ENCODE measurements at regions of chr10 and their contacts with region 1.

Region 1: DNA sequence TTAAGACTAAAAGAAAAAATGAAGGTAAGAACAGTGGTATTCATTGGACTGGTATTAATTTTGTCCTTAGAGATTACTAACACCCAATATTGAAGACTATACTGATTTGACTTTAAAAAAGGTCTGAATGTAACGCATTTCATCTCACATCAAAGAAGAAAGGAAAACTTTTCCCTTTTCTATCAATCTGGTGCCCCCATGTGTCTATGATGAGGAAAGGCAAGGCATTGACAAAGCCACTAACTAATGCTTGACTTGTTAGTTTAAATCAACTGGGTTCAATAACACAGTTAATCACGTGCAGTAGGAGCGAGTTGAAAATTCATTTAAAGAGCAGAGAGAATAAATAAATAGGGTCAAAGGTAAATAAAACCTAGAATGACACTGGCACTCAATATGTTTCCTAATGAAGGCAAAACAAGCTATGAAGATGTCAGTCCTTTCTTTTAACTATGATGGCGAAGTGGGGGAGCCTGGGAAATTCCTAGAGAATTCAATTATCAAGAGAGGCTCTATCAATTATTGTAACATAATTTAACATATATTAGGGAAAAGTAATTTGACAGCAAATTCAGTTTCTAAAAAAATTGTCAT is 180.9 kb downstream of the ANK3 start:
- H3K4me3 ChIP-seq: no peak overlapping the region
- H3K27ac ChIP-seq: no peak overlapping the region
- H3K4me1 ChIP-seq: no peaks in the 10 kb centered on the region
- CTCF ChIP-seq: no peak

Region 2: DNA sequence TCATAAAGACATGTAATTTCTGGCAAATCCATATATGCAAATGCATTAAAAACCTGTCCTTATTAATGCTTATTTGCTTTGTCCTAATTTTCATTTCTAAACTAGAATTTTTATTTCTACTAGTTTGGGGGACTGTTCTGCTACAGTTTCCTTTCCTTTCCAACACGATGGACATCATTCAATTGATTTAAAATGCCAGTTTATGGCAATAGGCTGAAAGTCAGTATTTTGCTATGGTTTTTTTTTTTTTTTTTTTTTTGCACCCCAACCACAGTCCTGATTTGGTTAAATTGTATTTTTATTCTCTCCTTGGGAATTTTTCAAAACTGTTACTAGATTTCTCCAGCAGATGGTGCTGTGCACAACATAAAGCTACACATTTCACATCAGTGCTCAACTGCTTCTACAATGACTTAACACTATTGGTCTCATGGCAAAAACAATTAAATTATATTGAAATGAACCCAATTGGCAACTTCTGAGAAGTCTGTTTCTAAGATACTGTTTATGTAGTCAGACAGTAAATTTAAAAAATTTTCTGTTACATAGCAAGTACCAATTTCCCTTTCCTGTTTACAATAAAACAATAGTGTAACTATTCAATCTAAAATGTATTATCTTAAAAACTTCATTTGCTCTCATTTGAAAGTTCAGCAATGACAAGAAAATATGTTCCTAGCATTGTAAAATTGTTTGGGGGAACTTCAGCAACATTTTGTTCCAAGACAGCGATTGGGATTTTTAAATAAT is 108.6 kb before region 1 on chr10:
- CTCF ChIA-PET with region 1: interaction called, 129 read pairs
- POLR2A ChIA-PET with region 1: no interaction called
- H3K4me3 ChIP-seq: no peak overlapping the region
- H3K27ac ChIP-seq: no peak overlapping the region
- H3K4me1 ChIP-seq: peaks cover 2% of the 10 kb centered on the region
- CTCF ChIP-seq: no peak

Region 3: DNA sequence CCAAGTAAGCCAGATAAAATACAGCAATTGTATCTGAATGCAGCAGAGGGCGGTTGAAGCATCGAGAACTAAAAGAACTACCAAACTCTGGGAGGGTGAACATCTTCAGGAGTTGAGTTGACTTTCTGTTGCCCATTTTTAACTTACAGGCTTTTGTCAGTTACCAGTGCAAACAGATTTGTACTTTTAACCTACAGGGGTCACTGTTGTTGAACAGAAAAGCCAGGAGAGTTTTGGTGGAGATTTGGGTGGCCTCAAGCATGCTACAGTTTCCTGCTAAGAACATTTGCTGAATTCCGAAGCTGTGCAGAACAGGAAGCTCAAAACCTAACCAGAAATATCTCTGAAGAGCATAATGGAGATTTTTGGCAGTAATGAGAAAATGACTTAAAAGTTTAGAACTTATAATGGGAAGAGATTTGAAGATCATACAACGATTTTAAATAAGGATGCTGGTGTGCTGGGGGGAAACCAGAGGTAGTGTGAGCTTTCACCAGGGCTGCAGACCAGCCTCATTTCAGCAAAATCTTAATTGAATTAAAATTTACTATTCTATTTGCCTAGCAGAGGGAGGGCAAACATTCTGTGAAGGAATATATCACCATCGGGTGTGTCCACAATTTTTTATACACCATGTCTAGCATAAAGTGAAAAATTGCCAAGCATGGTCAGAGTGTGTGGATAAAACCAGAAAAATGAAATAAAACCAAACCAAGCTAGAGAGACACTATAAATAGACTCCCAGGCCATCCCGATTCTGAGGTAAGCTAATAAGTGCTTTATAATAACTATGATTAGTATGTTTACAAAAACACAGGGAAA is 93.8 kb before region 1 on chr10:
- CTCF ChIA-PET with region 1: interaction called, 101 read pairs
- POLR2A ChIA-PET with region 1: no interaction called
- H3K4me3 ChIP-seq: no peak overlapping the region
- H3K27ac ChIP-seq: no peak overlapping the region
- H3K4me1 ChIP-seq: no peaks in the 10 kb centered on the region
- CTCF ChIP-seq: peak; percentile 47; the same call in 1 of the 2 replicates

Region 4: DNA sequence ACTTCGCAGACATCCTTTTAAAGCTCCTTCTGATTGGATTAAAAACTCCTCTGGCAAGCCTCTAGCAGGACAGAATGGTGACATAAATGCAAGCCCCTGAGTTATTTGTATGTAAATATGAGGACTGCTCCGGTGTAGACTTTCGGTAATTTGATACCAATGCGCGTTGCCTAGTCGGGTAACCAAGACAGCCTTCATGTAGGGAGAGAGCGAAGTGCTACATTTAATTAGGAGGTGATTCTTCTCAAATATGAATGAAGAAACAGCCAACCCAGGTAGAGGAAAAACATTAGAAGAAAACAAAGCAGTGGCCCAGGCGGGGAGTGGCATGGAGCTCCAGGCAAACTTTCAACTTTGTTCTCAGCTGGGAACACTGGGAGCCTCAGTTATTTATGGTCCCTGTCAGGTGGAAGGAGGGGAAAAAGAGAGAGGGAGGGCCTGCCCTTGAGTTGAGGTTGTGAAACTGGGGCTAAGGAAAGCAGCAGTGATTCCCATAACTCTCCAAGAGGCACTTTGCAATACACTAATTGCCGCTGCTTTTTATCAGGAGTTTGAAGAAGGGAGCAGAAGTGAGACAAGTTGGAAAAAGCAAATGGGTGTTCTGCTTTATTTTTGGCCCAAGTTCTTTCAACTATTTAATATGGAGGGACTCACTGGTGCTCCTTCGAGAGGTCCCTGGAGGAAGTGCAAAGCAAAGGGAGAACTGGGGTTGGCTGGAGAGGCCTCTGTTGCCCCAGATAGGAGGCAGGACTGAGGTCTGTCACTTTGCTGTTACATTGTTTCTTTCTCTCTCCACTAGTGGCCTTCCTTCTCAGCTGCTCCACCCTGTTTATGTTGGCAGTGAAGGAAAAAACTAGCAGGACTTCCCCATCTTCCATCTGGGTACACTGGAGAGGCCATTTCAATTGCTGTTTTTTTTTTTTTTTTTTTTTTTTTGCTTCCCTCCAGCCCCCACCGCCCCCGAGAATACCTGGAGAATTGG is 67.8 kb before region 1 on chr10:
- CTCF ChIA-PET with region 1: interaction called, 10 read pairs
- POLR2A ChIA-PET with region 1: no interaction called
- H3K4me3 ChIP-seq: peak overlapping the region; percentile 45
- H3K27ac ChIP-seq: peak overlapping the region; percentile 75
- H3K4me1 ChIP-seq: peaks cover 15% of the 10 kb centered on the region
- CTCF ChIP-seq: peak; percentile 57; the same call in 1 of the 2 replicates

Region 5: GRCh38 chr10:60197206-60197605 is 11.6 kb before region 1 on chr10:
- CTCF ChIA-PET with region 1: interaction called, 15 read pairs
- POLR2A ChIA-PET with region 1: no interaction called
- H3K4me3 ChIP-seq: no peak overlapping the region
- H3K27ac ChIP-seq: no peak overlapping the region
- H3K4me1 ChIP-seq: no peaks in the 10 kb centered on the region
- CTCF ChIP-seq: no peak

Region 6: DNA sequence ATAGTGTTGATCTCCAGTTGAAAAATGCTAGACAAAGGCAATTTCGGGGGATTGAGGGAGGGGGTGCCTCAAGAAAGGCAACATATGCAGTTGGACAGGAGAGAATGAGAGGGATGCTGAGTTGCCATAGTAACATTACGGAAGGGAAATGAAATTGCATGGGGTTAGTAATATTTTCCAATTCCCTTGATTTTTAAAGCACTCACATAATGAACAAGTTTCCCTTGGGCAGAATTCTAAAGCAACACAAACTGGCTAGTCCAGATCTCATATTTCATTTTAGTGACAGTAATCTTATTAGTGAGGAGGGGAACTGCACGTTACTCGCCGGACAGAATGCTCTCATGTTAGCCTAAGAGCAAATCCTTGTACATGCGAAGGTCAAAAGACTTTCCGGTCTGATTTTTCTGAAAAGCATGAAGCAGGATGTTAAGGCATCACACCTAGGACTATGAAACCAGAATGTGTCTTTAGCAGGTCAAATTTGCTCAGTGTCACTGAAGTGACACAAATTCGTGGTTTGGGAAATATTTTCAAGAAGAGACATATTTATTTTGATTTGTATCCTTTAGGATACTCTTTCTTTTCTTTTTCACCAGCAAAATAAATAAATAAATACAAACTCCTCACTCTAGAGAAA is 15.4 kb after region 1 on chr10:
- CTCF ChIA-PET with region 1: interaction called, 11 read pairs
- POLR2A ChIA-PET with region 1: no interaction called
- H3K4me3 ChIP-seq: no peak overlapping the region
- H3K27ac ChIP-seq: no peak overlapping the region
- H3K4me1 ChIP-seq: no peaks in the 10 kb centered on the region
- CTCF ChIP-seq: no peak

Region 7: DNA sequence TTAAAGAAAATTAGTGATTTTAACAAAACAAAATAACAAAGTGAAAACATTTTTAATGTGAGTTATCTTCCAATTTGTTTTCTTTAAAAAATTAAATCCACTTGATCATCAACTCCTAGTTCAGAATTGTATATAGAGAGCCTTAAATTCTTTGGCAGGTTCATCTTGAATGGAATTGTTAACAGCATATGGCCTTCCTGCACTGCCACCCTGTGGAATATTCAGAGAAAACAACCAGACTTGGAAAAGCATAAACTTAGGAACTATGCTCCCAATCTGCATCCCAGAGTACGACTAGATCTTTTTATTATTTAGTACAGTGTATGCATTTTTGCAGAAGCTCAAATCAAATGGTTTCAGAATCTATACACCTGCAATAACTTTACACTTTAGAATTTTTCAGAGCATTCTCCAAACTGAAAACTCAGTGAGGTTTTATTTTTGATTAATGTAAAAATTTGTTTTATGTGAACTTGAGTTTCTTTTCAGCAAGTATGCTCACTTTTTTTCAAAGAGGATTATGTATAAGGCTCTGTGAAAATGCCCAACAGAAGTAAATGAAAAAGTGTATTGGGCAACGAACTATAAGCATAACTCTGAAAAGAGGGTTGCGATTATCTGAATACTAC is 225.8 kb after region 1 on chr10:
- CTCF ChIA-PET with region 1: interaction called, 14 read pairs
- POLR2A ChIA-PET with region 1: no interaction called
- H3K4me3 ChIP-seq: no peak overlapping the region
- H3K27ac ChIP-seq: no peak overlapping the region
- H3K4me1 ChIP-seq: no peaks in the 10 kb centered on the region
- CTCF ChIP-seq: peak; percentile 36; the same call in 1 of the 2 replicates